HCT116 (cell line): ENCODE measurements at regions of chr16 and their contacts with region 1.

Region 1: GRCh38 chr16:12095275-12096156 is 119.0 kb downstream of the SNX29 start:
- DNase-seq: peak; percentile 22
- ATAC-seq: peak; percentile 78
- H3K4me3 ChIP-seq: no peak overlapping the region
- H3K27ac ChIP-seq: no peak overlapping the region
- H3K4me1 ChIP-seq: peaks cover 11 to 13% of the 10 kb centered on the region in 2 experiments; a peak in 3 of 4 replicates
- H3K27me3 ChIP-seq: no peaks in the 10 kb centered on the region; the same call in 1 of the 2 replicates
- CTCF ChIP-seq: peak; percentile 69 to 92 (median 85); a peak in 5 of 6 replicates
- POLR2A ChIP-seq: no peak
- RAD21 ChIP-seq: peak; percentile 80

Region 2: GRCh38 chr16:12043953-12044352 is 51.6 kb before region 1 on chr16:
- CTCF ChIA-PET with region 1: no interaction called
- POLR2A ChIA-PET with region 1: no interaction called
- RAD21 ChIA-PET with region 1: no interaction called
- intact Hi-C with region 1: no loop called
- DNase-seq: no peak
- ATAC-seq: no peak
- H3K4me3 ChIP-seq: no peak overlapping the region
- H3K27ac ChIP-seq: no peak overlapping the region
- H3K4me1 ChIP-seq: no peaks in the 10 kb centered on the region
- H3K27me3 ChIP-seq: no peaks in the 10 kb centered on the region
- CTCF ChIP-seq: no peak
- POLR2A ChIP-seq: no peak
- RAD21 ChIP-seq: no peak

Region 3: DNA sequence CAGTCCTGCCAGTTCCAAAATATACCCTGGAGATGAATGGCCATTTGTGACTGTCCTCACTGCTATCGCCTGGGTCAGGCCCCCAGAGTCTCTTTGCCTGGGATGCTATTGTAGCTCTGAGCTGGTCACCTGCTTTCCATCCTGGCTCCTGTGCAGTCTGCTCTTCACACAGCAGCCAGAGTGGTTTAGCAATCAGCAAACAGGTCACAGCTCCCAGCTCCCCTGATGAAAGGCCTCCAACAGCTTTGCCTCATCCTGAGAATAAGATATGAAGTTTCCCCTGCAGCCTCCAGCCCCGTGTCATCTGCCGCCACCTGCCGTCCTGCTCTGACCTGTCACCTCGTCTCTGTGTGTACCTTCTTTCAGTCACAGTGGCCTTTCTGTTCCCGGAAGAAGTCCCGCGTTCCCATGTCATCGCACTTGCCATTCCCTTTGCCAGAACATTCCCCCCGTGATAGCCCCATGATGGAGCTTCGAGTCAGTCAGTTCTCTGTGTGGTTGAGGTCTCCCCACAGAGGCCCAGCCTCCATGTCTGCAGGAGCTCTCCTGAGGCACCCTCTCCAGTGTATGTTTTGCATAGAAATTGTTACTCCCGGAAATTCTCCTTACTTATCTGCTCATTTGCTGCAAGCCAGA is 162.5 kb after region 1 on chr16:
- CTCF ChIA-PET with region 1: interaction called, 22 read pairs
- POLR2A ChIA-PET with region 1: no interaction called
- RAD21 ChIA-PET with region 1: interaction called, 3 read pairs
- intact Hi-C with region 1: loop called (anchors 1 kb)
- DNase-seq: no peak
- ATAC-seq: peak; percentile 54; the same call in 1 of the 2 replicates
- H3K4me3 ChIP-seq: no peak overlapping the region
- H3K27ac ChIP-seq: no peak overlapping the region
- H3K4me1 ChIP-seq: peaks cover 4 to 6% of the 10 kb centered on the region in 2 experiments; a peak in 2 of 4 replicates
- H3K27me3 ChIP-seq: peaks cover 15% of the 10 kb centered on the region; the same call in 1 of the 2 replicates
- CTCF ChIP-seq: peak in 2 of 3 experiments; percentile 8 to 24; a peak in 1 of 6 replicates
- POLR2A ChIP-seq: no peak
- RAD21 ChIP-seq: peak; percentile 34

Region 4: DNA sequence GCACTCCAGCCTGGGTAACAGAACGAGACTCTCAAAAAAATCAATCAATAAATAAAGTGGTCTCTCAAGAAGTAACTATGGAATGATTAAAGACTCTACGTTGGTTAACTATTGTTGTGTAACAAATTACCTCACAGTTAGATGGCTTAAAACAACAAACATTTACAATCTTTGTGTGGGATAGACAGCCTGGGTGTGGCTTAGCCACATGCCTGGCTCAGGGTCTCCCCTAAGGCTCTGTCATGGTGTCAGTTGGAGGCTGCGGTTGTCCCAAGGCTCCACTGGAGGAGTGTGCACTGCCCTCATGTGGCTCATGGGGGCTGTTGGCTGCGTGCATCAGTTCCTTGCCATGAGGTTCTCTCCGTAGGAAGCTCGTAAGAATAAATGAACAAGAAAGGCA is 175.5 kb after region 1 on chr16:
- CTCF ChIA-PET with region 1: interaction called, 19 read pairs
- POLR2A ChIA-PET with region 1: no interaction called
- RAD21 ChIA-PET with region 1: no interaction called
- intact Hi-C with region 1: loop called (anchors 2 kb)
- DNase-seq: peak; percentile 12
- ATAC-seq: peak; percentile 95
- H3K4me3 ChIP-seq: no peak overlapping the region
- H3K27ac ChIP-seq: no peak overlapping the region
- H3K4me1 ChIP-seq: no peaks in the 10 kb centered on the region
- H3K27me3 ChIP-seq: no peaks in the 10 kb centered on the region
- CTCF ChIP-seq: peak; percentile 18 to 56 (median 51); a peak in 5 of 6 replicates
- POLR2A ChIP-seq: no peak
- RAD21 ChIP-seq: peak; percentile 47

Region 5: GRCh38 chr16:13453938-13454553 is 1358.5 kb after region 1 on chr16:
- CTCF ChIA-PET with region 1: no interaction called
- POLR2A ChIA-PET with region 1: no interaction called
- RAD21 ChIA-PET with region 1: no interaction called
- intact Hi-C with region 1: loop called (anchors 10 kb)
- DNase-seq: peak; percentile 4
- ATAC-seq: no peak
- H3K4me3 ChIP-seq: no peak overlapping the region
- H3K27ac ChIP-seq: no peak overlapping the region
- H3K4me1 ChIP-seq: no peaks in the 10 kb centered on the region
- H3K27me3 ChIP-seq: no peaks in the 10 kb centered on the region; the same call in 1 of the 2 replicates
- CTCF ChIP-seq: peak; percentile 18 to 72 (median 47); a peak in 4 of 6 replicates
- POLR2A ChIP-seq: no peak
- RAD21 ChIP-seq: peak; percentile 34